PC-9 (cell line): ENCODE measurements at regions of chr10 and their contacts with region 1.

Region 1: DNA sequence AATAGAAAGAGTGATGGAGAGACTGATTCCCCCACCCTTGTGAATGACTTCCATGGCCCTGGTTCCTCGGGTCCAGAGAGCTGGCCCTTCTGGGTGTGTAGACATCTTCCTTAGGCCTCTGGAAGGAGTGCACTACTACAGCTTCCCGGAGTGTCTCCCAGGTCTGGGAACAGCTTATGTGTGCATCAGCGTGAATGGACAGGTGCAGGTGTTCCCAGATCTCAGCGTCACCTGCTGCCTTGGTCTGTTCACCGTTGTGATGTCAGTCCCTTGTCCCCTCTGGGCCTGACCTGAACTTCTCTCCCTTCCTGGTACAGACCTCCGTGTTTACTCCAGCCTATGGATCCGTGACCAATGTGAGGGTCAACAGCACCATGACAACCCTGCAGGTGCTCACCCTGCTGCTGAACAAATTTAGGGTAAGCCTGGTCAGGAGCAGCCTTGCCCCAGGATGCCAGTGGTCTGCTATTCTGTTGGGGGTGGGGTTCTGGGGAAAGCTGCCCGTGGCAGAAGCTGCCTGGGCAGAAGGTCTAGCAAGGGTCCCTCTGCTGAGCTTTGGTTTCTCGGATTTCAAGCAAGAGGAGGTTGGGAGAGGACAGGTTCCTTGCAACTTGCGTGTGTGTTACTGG is 10.5 kb upstream of the DEPP1 start:
- DNase-seq: no peak
- H3K4me3 ChIP-seq: no peak overlapping the region
- H3K27ac ChIP-seq: no peak overlapping the region
- H3K4me1 ChIP-seq: peaks cover 11% of the 10 kb centered on the region
- H3K27me3 ChIP-seq: no peaks in the 10 kb centered on the region
- CTCF ChIP-seq: no peak

Region 2: GRCh38 chr10:43905512-43906236 is 1083.4 kb before region 1 on chr10:
- CTCF ChIA-PET with region 1: no interaction called
- POLR2A ChIA-PET with region 1: interaction called, 16 read pairs
- intact Hi-C with region 1: no loop called
- DNase-seq: peak in 1 of 2 experiments; percentile 16
- H3K4me3 ChIP-seq: no peak overlapping the region
- H3K27ac ChIP-seq: no peak overlapping the region
- H3K4me1 ChIP-seq: no peaks in the 10 kb centered on the region
- H3K27me3 ChIP-seq: peaks cover 66% of the 10 kb centered on the region
- CTCF ChIP-seq: no peak

Region 3: GRCh38 chr10:45111509-45111908 is 122.4 kb after region 1 on chr10:
- CTCF ChIA-PET with region 1: interaction called, 13 read pairs
- POLR2A ChIA-PET with region 1: no interaction called
- intact Hi-C with region 1: no loop called
- DNase-seq: no peak
- H3K4me3 ChIP-seq: no peak overlapping the region
- H3K27ac ChIP-seq: no peak overlapping the region
- H3K4me1 ChIP-seq: no peaks in the 10 kb centered on the region
- H3K27me3 ChIP-seq: 0 out of 2 replicates have a peak, but pooled peaks cover 4% of the 10 kb centered on the region
- CTCF ChIP-seq: no peak